Stomach (tissue), 19 donors: ENCODE measurements at regions of chr7 and their contacts with region 1.

Region 1: DNA sequence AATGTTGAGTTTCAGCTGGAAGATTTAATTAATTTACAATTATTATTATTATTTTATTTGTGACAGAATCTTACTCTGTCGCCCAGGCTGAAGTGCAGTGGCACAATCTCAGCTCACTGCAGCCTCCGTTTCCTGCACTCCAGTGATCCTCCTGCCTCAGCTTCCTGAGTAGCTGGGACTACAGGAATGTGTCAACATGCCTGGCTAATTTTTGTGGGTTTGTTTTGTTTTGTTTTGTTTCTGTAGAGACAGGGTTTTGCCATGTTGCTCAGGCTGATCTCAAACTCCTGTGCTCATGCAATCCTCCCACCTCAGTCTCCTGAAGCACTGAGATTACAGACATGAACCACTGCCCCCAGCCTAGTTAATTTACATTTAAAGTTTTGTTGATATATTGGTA is 93.8 kb upstream of the MEOX2 start:
- DNase-seq: no peak
- H3K4me3 ChIP-seq: no peak overlapping the region
- H3K27ac ChIP-seq: no peak overlapping the region
- H3K4me1 ChIP-seq: no peaks in the 10 kb centered on the region
- H3K27me3 ChIP-seq: no peaks in the 10 kb centered on the region
- CTCF ChIP-seq: no peak
- EP300 ChIP-seq: no peak
- POLR2A ChIP-seq: no peak

Region 2: GRCh38 chr7:15839416-15840100 is 59.3 kb after region 1 on chr7:
- intact Hi-C with region 1: loop called (anchors 10 kb)
- DNase-seq: peak in 1 of 2 donors; percentile 78
- H3K4me3 ChIP-seq: peak overlapping the region; percentile 0 to 33 (median 16)
- H3K27ac ChIP-seq: peak overlapping the region in 4 of 5 donors; percentile 27 to 61 (median 52)
- H3K4me1 ChIP-seq: no peaks in the 10 kb centered on the region
- H3K27me3 ChIP-seq: no peaks in the 10 kb centered on the region
- CTCF ChIP-seq: no peak
- EP300 ChIP-seq: no peak
- POLR2A ChIP-seq: no peak